A673 (cell line): ENCODE measurements at regions of chr12 and their contacts with region 1.

Region 1: DNA sequence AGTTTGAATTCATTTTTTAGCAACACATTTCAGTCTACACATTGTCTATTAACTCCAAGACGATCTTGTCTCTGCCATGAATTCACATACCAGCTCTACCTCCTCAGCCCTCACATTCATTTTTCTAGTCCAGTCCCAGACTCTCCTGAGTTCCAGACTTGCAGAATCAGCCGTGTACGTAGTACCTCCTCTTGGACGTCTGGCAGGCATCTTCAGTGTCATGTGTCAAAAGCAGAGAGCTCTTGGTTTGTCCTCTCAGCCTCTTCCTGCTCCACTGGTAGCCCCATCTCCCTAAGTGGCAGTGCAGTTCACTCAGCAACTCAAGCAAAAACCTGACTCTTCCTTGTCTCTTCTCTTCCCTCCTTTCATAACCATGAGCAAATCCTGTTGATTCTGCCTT is 14.5 kb upstream of the TCTN2 start:
- DNase-seq: no peak
- H3K4me3 ChIP-seq: no peak overlapping the region
- H3K27ac ChIP-seq: no peak overlapping the region
- H3K4me1 ChIP-seq: no peaks in the 10 kb centered on the region
- H3K27me3 ChIP-seq: no peaks in the 10 kb centered on the region
- CTCF ChIP-seq: no peak

Region 2: DNA sequence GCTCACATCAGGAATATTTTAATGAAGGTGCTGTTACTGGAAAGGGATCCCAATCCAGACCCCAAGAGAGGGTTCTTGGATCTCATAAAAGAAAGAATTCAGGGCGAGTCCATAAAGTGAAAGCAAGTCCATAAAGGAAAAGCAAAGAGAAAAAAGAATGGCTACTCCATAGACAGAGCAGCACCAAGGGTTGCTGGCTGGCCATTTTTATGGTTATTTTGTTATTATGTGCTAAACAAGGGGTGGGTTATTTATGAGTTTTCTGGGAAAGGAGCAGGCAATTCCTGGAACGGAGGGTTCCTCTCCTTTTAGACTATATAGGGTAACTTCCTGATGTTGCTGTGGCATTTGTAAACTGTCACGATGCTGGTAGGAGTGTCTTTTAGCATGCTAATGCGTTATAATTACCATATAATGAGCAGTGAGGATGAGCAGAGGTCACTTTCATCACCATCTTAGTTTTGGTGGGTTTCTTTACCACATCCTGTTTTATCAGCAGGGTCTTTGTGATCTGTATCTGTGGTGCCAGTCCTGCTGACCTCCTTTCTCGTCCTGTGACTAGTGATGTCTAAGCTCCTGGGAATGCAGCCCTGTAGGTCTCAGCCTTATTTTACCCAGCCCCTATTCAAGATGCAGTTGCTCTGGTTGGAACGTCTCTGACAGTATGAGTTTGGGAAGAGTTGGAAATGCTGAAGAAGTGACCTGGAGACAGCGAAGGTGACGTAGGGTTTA is 417.1 kb after region 1 on chr12:
- CTCF ChIA-PET with region 1: no interaction called
- POLR2A ChIA-PET with region 1: no interaction called
- intact Hi-C with region 1: no loop called
- DNase-seq: no peak
- H3K4me3 ChIP-seq: no peak overlapping the region
- H3K27ac ChIP-seq: no peak overlapping the region
- H3K4me1 ChIP-seq: peaks cover 24% of the 10 kb centered on the region
- H3K27me3 ChIP-seq: no peaks in the 10 kb centered on the region
- CTCF ChIP-seq: no peak

Region 3: GRCh38 chr12:124434951-124435805 is 778.8 kb after region 1 on chr12:
- CTCF ChIA-PET with region 1: no interaction called
- POLR2A ChIA-PET with region 1: interaction called, 10 read pairs
- intact Hi-C with region 1: no loop called
- DNase-seq: no peak
- H3K4me3 ChIP-seq: no peak overlapping the region
- H3K27ac ChIP-seq: peak overlapping the region; percentile 32
- H3K4me1 ChIP-seq: peaks cover 16% of the 10 kb centered on the region
- H3K27me3 ChIP-seq: no peaks in the 10 kb centered on the region
- CTCF ChIP-seq: no peak